ENCODE measurements at regions of chr3 and their contacts with region 1.

Region 1: GRCh38 chr3:49723628-49724551 is at the start of gene GMPPB:
- DNase-seq: peak; percentile 98 to 99 (median 99)
- ATAC-seq: peak; percentile 81 to 90 (median 88)
- H3K4me3 ChIP-seq: peak within 1 kb of the TSS; percentile 73 to 100 (median 96)
- H3K27ac ChIP-seq: peak within 1 kb of the TSS; percentile 60 to 98 (median 92)
- H3K4me1 ChIP-seq: peaks cover 11 to 37% (median 24%) of the 10 kb centered on the region in 12 donors
- H3K27me3 ChIP-seq: no peaks in the 10 kb centered on the region
- CTCF ChIP-seq: peak in 1 of 12 donors; percentile 2
- POLR2A ChIP-seq: peak in 1 of 2 donors; percentile 78
- total RNA-seq, gene GMPPB: 9.4 to 21.8 (median 13.7) TPM

Region 2: GRCh38 chr3:49769286-49769915 is 45.5 kb after region 1 on chr3:
- intact Hi-C with region 1: no loop called
- DNase-seq: no peak
- ATAC-seq: no peak
- H3K4me3 ChIP-seq: no peak overlapping the region
- H3K27ac ChIP-seq: no peak overlapping the region
- H3K4me1 ChIP-seq: peaks cover 0 to 5% (median 0%) of the 10 kb centered on the region in 12 donors
- H3K27me3 ChIP-seq: no peaks in the 10 kb centered on the region
- CTCF ChIP-seq: no peak
- POLR2A ChIP-seq: no peak

Region 3: DNA sequence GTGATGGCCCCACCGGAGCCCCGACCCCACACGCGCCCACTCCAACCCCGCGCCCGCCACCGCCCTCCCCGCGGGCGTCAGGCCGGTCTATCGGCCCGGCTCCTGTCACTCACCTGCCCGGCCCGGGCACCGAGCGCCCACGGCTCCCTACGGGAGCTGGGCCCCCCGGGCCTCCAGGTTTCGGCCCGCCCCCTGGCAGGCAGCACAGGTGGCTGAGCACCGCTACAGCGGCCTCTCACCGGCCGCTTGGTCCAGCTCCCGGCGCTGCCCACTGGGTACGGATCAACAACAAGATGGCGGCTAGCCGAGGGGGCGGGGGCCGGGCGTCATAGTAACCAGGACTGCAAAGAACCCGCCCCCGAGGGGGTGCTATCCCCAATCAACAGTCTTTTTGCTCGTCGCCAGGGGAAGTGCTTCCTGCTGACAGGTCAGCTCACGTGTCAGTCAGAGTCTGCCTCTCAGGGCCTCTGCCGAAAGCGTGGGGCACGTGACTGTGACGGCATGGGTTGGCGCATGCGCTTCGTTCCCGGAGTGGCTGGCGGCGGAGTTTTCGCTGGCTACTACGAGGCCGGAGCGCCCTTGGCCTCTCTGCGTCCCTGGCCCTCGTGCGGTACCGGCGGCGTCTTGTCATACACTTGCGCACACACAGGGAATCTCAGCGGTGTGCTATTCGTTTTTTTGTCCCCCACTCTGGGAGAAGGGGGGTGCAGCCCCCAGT is 62.5 kb after region 1 on chr3 and contains the start of gene IP6K1:
- intact Hi-C with region 1: loop called in 2 of 10 experiments (anchors 5 kb)
- DNase-seq: peak; percentile 100
- ATAC-seq: peak; percentile 100
- H3K4me3 ChIP-seq: peak within 1 kb of the TSS; percentile 73 to 98 (median 92)
- H3K27ac ChIP-seq: peak within 1 kb of the TSS; percentile 85 to 99 (median 94)
- H3K4me1 ChIP-seq: peaks cover 0 to 41% (median 29%) of the 10 kb centered on the region in 12 donors
- H3K27me3 ChIP-seq: no peaks in the 10 kb centered on the region
- CTCF ChIP-seq: peak in 2 of 12 donors; percentile 1 to 3
- POLR2A ChIP-seq: peak in 1 of 2 donors; percentile 85
- total RNA-seq, gene IP6K1: 12.6 to 36.6 (median 20.4) TPM

Region 4: GRCh38 chr3:50126287-50127211 is 402.7 kb after region 1 on chr3:
- intact Hi-C with region 1: no loop called
- DNase-seq: peak in 3 of 5 donors; percentile 13 to 51 (median 18)
- ATAC-seq: no peak
- H3K4me3 ChIP-seq: no peak overlapping the region
- H3K27ac ChIP-seq: no peak overlapping the region
- H3K4me1 ChIP-seq: peaks cover 0 to 25% (median 2%) of the 10 kb centered on the region in 12 donors
- H3K27me3 ChIP-seq: no peaks in the 10 kb centered on the region
- CTCF ChIP-seq: no peak
- POLR2A ChIP-seq: no peak

Region 5: DNA sequence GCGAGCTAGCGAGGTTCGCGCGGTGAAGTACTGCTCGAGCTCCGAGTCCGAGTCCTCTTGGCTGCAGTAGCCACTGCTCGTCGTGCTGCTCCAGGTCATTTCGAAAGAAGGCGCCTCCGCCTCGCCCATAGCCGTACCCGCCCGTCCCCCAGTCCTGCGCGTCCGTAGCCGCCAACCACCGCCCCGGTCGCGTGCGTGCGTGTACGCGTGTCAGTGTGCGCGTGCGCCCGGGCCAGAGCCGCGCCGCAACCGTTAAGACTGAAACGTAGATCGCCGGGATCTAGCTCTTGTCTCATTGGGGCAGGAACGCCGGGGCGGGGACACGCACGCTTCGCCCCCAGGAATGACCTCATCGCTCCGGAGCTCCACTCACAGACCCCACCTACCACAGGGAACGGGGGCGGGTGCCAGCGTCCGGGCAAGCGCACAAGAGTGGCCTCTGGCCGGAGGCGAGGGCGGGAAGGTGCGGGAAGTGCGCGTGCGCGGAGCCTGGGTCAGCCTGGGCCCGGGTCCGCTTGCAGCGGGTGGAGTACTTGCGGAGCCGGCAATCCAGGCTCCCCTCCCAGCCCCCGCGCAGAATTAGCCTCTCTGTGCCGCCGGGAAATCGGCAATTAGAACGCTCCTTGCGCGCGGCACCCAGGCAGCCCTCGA is 613.4 kb after region 1 on chr3:
- intact Hi-C with region 1: no loop called
- DNase-seq: peak; percentile 100
- ATAC-seq: peak; percentile 85 to 90 (median 86)
- H3K4me3 ChIP-seq: peak overlapping the region; percentile 70 to 97 (median 92)
- H3K27ac ChIP-seq: peak overlapping the region; percentile 92 to 100 (median 98)
- H3K4me1 ChIP-seq: peaks cover 13 to 88% (median 72%) of the 10 kb centered on the region in 12 donors
- H3K27me3 ChIP-seq: peaks cover 0 to 4% (median 0%) of the 10 kb centered on the region in 9 donors
- CTCF ChIP-seq: no peak
- POLR2A ChIP-seq: peak; percentile 64 to 93